ENCODE measurements at regions of chr10 and their contacts with region 1.

Region 1: GRCh38 chr10:24383681-24384106 is 174.8 kb downstream of the KIAA1217 start:
- DNase-seq: peak; percentile 96 to 98
- ATAC-seq: peak; percentile 88 to 93
- H3K4me3 ChIP-seq: peak overlapping the region in 3 of 4 donors; percentile 13 to 34 (median 29)
- H3K27ac ChIP-seq: peak overlapping the region; percentile 89 to 98 (median 94)
- H3K4me1 ChIP-seq: peaks cover 40 to 56% of the 10 kb centered on the region in 2 donors
- H3K27me3 ChIP-seq: no peaks in the 10 kb centered on the region
- CTCF ChIP-seq: peak; percentile 34 to 77 (median 65)
- POLR2A ChIP-seq: peak; percentile 54 to 80

Region 2: GRCh38 chr10:24047176-24047575 is 336.5 kb before region 1 on chr10:
- in situ Hi-C with region 1: no loop called
- intact Hi-C with region 1: no loop called
- DNase-seq: no peak
- ATAC-seq: no peak
- H3K4me3 ChIP-seq: no peak overlapping the region
- H3K27ac ChIP-seq: no peak overlapping the region
- H3K4me1 ChIP-seq: peaks cover 2 to 12% of the 10 kb centered on the region in 2 donors
- H3K27me3 ChIP-seq: no peaks in the 10 kb centered on the region
- CTCF ChIP-seq: no peak
- POLR2A ChIP-seq: no peak

Region 3: GRCh38 chr10:24118246-24118645 is 265.4 kb before region 1 on chr10:
- in situ Hi-C with region 1: no loop called
- intact Hi-C with region 1: loop called (anchors 10 kb)
- DNase-seq: no peak
- ATAC-seq: no peak
- H3K4me3 ChIP-seq: peak overlapping the region; percentile 14 to 45 (median 36)
- H3K27ac ChIP-seq: peak overlapping the region; percentile 90 to 96 (median 92)
- H3K4me1 ChIP-seq: peaks cover 30 to 42% of the 10 kb centered on the region in 2 donors
- H3K27me3 ChIP-seq: no peaks in the 10 kb centered on the region
- CTCF ChIP-seq: no peak
- POLR2A ChIP-seq: peak; percentile 20 to 38

Region 4: GRCh38 chr10:24174014-24174413 is 209.7 kb before region 1 on chr10:
- in situ Hi-C with region 1: no loop called
- intact Hi-C with region 1: no loop called
- DNase-seq: no peak
- ATAC-seq: no peak
- H3K4me3 ChIP-seq: no peak overlapping the region
- H3K27ac ChIP-seq: no peak overlapping the region
- H3K4me1 ChIP-seq: peaks cover under 1 to 1% of the 10 kb centered on the region in 2 donors
- H3K27me3 ChIP-seq: no peaks in the 10 kb centered on the region
- CTCF ChIP-seq: no peak
- POLR2A ChIP-seq: no peak

Region 5: GRCh38 chr10:24249829-24250415 is 133.8 kb before region 1 on chr10:
- in situ Hi-C with region 1: no loop called
- intact Hi-C with region 1: loop called (anchors 5 kb)
- DNase-seq: peak in 1 of 2 donors; percentile 54
- ATAC-seq: peak in 1 of 2 donors; percentile 48
- H3K4me3 ChIP-seq: no peak overlapping the region
- H3K27ac ChIP-seq: peak overlapping the region; percentile 94 to 98 (median 96)
- H3K4me1 ChIP-seq: peaks cover 81 to 85% of the 10 kb centered on the region in 2 donors
- H3K27me3 ChIP-seq: no peaks in the 10 kb centered on the region
- CTCF ChIP-seq: no peak
- POLR2A ChIP-seq: no peak

Region 6: DNA sequence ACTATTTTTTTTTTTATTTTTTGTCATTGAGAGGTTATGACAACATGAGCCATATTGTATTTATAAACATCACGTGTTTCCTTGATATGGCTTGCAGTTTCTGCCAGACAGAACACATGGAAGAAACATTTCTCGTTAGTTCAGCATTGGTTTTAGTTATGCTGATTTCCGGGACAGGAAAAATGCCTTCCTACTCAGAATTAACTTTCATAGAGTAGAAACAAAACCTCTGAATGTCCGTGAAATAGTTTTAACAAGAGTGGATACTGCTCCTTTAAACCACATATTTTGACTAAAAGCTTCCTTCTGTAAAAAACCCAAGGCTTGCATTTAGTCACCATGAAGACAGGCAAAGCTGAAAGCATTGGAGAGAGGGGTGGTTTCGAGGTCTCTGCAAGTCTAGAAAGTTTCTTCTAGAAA is 65.6 kb after region 1 on chr10:
- in situ Hi-C with region 1: no loop called
- intact Hi-C with region 1: loop called (anchors 5 kb)
- DNase-seq: no peak
- ATAC-seq: peak; percentile 52 to 59
- H3K4me3 ChIP-seq: peak overlapping the region; percentile 26 to 60 (median 53)
- H3K27ac ChIP-seq: peak overlapping the region; percentile 76 to 90 (median 84)
- H3K4me1 ChIP-seq: peaks cover 52 to 60% of the 10 kb centered on the region in 2 donors
- H3K27me3 ChIP-seq: no peaks in the 10 kb centered on the region
- CTCF ChIP-seq: no peak
- POLR2A ChIP-seq: peak; percentile 49 to 80

Region 7: GRCh38 chr10:24465891-24466818 is 82.5 kb after region 1 on chr10:
- in situ Hi-C with region 1: no loop called
- intact Hi-C with region 1: loop called (anchors 2 kb)
- DNase-seq: peak; percentile 45 to 53
- ATAC-seq: peak; percentile 53 to 70
- H3K4me3 ChIP-seq: peak overlapping the region; percentile 7 to 53 (median 34)
- H3K27ac ChIP-seq: peak overlapping the region; percentile 69 to 87 (median 83)
- H3K4me1 ChIP-seq: peaks cover 88% of the 10 kb centered on the region in 2 donors
- H3K27me3 ChIP-seq: no peaks in the 10 kb centered on the region
- CTCF ChIP-seq: no peak
- POLR2A ChIP-seq: peak; percentile 20 to 75

Region 8: GRCh38 chr10:24503461-24504320 is 120.0 kb after region 1 on chr10:
- in situ Hi-C with region 1: loop called in 1 of 4 experiments (anchors 25 kb)
- intact Hi-C with region 1: no loop called
- DNase-seq: no peak
- ATAC-seq: peak; percentile 33 to 60
- H3K4me3 ChIP-seq: no peak overlapping the region
- H3K27ac ChIP-seq: peak overlapping the region; percentile 5 to 45 (median 17)
- H3K4me1 ChIP-seq: peaks cover 3 to 6% of the 10 kb centered on the region in 2 donors
- H3K27me3 ChIP-seq: no peaks in the 10 kb centered on the region
- CTCF ChIP-seq: peak; percentile 17 to 57 (median 53)
- POLR2A ChIP-seq: no peak

Region 9: DNA sequence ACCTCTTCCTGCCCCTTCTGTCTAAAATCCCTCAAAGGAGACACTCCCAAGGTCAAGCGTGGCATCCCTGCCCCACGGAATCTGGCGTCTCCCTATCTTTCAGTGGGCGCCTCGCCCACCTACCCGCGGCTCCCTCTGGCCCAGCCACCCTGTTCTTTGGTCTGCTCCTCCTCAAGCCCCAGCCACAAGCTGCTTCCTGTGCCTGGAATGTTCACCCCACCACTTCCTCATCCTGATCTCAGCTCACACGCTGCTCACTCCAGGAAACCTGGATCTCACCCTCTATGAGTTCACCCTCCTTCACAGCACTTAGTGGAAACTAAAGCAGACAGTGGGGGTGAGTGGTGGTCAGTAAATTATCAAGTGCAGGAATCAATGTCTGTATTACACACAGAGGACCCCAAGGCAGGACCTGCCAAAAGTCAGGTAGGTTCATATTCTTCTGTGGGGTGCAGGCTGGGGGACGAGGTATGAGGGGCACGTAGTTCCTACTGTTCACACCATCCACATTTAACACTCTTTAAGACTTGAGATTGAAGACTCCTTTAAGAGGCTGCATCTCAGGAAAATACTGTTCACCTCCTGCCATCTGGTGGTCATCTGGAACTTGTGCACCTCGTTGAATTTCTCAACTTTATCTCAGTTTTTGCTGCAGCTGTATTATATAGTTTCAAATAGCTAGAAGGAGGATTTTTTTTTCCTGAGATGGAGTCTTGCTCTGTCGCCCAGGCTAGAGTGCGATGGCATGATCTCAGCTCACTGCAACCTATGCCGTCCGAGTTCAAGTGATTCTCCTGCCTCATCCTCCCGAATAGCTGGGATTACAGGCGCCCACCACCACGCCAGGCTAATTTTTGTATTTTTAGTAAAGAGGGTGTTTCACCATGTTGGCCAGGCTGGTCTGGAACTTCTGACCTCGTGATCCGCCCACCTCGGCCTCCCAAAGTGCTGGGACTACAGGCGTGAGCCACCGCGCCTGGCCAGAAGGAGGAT is 173.4 kb after region 1 on chr10:
- in situ Hi-C with region 1: no loop called
- intact Hi-C with region 1: no loop called
- DNase-seq: no peak
- ATAC-seq: peak in 1 of 2 donors; percentile 45
- H3K4me3 ChIP-seq: no peak overlapping the region
- H3K27ac ChIP-seq: no peak overlapping the region
- H3K4me1 ChIP-seq: peaks cover 24 to 32% of the 10 kb centered on the region in 2 donors
- H3K27me3 ChIP-seq: no peaks in the 10 kb centered on the region
- CTCF ChIP-seq: peak; percentile 58 to 73 (median 63)
- POLR2A ChIP-seq: no peak

Region 10: DNA sequence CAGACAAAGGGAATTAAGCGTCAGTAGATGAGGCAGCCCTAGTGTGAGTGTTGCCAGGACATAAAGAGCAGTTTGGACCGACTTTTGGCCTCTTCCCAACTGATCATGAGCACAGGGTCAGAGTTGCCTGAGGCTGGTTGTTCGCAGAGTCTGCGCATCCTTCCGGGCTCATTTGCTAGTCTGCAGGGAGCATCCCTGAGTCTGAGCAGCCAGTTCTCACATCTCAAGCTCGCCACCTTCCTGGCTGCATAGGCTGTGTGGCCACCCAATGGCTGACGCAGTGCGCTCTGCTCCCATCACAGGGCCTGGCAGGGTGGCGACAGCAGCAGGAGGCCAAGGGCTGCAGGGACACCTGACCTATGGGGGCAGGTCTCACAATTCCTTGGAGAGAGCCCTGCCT is 1837.8 kb after region 1 on chr10:
- in situ Hi-C with region 1: no loop called
- intact Hi-C with region 1: no loop called
- DNase-seq: no peak
- ATAC-seq: no peak
- H3K4me3 ChIP-seq: no peak overlapping the region
- H3K27ac ChIP-seq: no peak overlapping the region
- H3K4me1 ChIP-seq: no peaks in the 10 kb centered on the region
- H3K27me3 ChIP-seq: peaks cover 32 to 41% (median 40%) of the 10 kb centered on the region in 3 donors
- CTCF ChIP-seq: no peak
- POLR2A ChIP-seq: no peak

Measured in gastrocnemius medialis (tissue), 4 donors.